Lower leg skin (tissue), 4 donors: ENCODE measurements at regions of chr18 and their contacts with region 1.

Region 1: DNA sequence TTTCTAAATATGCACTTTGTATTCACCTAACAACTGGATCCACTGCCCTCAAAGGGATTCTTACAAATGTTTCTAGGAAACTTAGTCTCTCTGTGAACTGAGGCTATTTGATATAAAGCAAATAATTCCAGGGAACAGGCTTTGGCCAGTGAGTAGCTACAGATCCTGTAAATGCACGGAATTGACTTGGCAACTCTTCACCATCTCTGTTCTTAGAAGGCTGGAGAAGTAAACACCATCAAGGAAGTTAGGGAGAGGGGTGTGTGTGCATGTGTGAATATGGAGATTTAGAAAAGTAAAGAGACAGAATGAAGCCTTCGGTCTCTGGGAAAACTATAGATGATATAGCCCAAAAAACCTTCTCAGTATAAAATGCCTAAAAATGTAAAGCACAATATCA is 10.7 kb downstream of the CIDEA start:
- DNase-seq: no peak
- H3K4me3 ChIP-seq: no peak overlapping the region
- CTCF ChIP-seq: no peak
- POLR2A ChIP-seq: no peak

Region 2: GRCh38 chr18:11925800-11926481 is 338.9 kb before region 1 on chr18:
- intact Hi-C with region 1: loop called (anchors 5 kb)
- DNase-seq: no peak
- H3K4me3 ChIP-seq: no peak overlapping the region
- CTCF ChIP-seq: no peak
- POLR2A ChIP-seq: no peak

Region 3: DNA sequence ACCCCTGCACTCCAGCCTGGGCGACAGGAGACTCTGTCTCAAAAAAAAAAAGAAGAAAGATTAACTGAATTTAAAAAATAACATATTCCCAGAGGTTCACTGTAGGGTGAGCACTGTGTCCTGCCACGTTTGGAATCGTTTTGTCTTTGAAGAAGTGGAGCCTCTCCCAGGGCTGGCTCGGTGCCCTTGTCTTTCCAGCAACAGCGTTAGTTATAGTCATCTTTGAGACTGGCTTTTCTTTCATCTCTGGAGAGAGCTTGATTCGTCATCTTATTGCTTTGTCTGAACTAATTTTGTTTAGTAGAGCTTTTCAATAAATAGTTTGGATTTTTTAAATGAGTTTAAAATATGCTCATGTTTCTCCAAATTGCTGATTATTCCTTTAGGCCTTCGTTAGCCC is 233.0 kb before region 1 on chr18:
- intact Hi-C with region 1: no loop called
- DNase-seq: peak; percentile 85 to 95
- H3K4me3 ChIP-seq: no peak overlapping the region
- CTCF ChIP-seq: no peak
- POLR2A ChIP-seq: no peak

Region 4: GRCh38 chr18:12327510-12328178 is 62.8 kb after region 1 on chr18:
- intact Hi-C with region 1: no loop called
- DNase-seq: peak; percentile 54 to 94
- H3K4me3 ChIP-seq: no peak overlapping the region
- CTCF ChIP-seq: no peak
- POLR2A ChIP-seq: no peak